CD4-positive, alpha-beta T cell (primary cell): ENCODE measurements at regions of chr3 and their contacts with region 1.

Region 1: GRCh38 chr3:38496131-38496910 is at the start of gene EXOG:
- DNase-seq: peak; percentile 92 to 97 (median 95)
- ATAC-seq: peak; percentile 92
- H3K4me3 ChIP-seq: peak within 1 kb of the TSS; percentile 93
- H3K4me3 Mint-ChIP-seq: peak within 1 kb of the TSS; percentile 90
- H3K27ac ChIP-seq: peak within 1 kb of the TSS in 1 of 2 donors; percentile 27
- H3K27ac Mint-ChIP-seq: peak within 1 kb of the TSS; percentile 59
- H3K4me1 ChIP-seq: peaks cover 10% of the 10 kb centered on the region
- H3K4me1 Mint-ChIP-seq: peaks cover 31% of the 10 kb centered on the region
- H3K27me3 ChIP-seq: no peaks in the 10 kb centered on the region
- H3K27me3 Mint-ChIP-seq: no peaks in the 10 kb centered on the region
- CTCF ChIP-seq: peak; percentile 89
- total RNA-seq, gene EXOG: 13.7 to 16.0 TPM

Region 2: DNA sequence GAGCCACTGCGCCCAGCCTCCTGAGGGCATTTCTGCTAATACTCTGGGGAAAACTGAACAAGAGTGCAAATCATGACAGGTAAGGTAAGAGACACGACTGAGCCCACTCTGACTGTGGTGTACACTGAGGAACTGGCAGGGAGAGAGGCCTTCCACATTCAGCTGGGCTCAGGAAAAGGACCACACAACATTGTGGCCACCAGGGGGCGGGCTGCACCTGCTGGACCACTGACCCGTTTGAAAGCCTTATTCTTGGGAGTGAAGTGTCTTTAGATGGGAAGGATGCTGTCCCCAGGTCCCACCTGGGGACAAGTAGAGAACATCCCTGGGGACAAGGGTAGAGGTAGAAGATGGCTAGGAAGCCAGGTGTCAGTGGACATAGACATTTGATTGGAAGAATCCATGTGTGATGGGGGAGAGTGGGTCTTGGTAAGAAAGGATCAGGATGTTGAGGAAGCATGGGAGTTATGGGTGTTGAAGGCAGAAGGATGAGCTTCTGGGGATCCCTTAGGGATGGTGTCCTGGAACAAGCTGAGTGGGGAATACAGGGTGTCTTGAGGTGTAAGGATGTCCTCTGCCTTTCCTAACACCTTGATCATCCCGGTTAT is 640.9 kb before region 1 on chr3:
- CTCF ChIA-PET with region 1: no interaction called
- POLR2A ChIA-PET with region 1: no interaction called
- intact Hi-C with region 1: loop called in 1 of 2 experiments (anchors 5 kb)
- DNase-seq: peak; percentile 50 to 85 (median 70)
- ATAC-seq: peak; percentile 47
- H3K4me3 ChIP-seq: no peak overlapping the region
- H3K4me3 Mint-ChIP-seq: peak overlapping the region; percentile 7
- H3K27ac ChIP-seq: no peak overlapping the region
- H3K27ac Mint-ChIP-seq: no peak overlapping the region
- H3K4me1 ChIP-seq: peaks cover 8% of the 10 kb centered on the region
- H3K4me1 Mint-ChIP-seq: peaks cover 8% of the 10 kb centered on the region
- H3K27me3 ChIP-seq: no peaks in the 10 kb centered on the region
- H3K27me3 Mint-ChIP-seq: no peaks in the 10 kb centered on the region
- CTCF ChIP-seq: peak; percentile 89

Region 3: DNA sequence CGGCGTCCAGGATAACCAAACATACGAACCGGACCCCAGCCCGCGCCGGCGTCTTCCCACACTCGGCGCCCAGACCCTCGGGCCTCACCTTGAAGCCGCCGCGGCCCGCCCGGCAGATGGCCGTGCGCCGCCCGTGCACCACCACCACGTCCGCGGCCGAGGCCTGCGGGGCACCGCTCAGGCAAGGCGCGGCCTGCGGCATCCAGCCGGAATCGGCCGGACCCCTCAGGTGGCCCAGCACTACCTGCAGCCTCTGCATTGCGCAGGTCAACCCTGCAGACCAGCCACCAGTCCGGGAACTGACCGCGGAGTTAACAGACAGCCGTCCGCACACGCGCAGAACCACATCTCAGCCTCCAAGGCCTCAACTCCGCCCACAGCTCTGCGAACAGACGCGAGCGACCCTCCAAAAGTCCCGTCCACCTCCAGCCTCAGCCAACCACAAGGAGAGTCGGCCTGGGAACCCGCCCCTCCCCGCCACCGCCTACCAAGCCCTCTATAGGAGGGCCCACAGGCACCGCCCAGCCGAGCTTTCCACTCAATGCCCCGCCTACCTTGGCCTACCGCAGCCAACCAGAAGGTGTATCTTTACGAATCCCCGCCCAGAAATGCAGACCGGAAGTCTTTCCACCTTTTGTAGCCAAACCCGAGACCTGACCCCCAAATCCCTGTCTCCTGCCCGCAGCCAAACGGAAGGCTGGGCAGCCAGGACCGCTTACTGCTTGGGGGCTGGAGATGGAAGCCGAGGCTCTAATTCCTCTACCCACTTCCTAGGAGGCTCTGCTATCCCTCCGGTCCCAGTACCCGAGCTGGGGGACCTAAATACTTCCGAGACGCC is 359.3 kb before region 1 on chr3 and contains the start of gene ACAA1:
- CTCF ChIA-PET with region 1: no interaction called
- POLR2A ChIA-PET with region 1: no interaction called
- intact Hi-C with region 1: loop called in 1 of 2 experiments (anchors 5 kb)
- DNase-seq: peak; percentile 91 to 99 (median 96)
- ATAC-seq: peak; percentile 84
- H3K4me3 ChIP-seq: peak within 1 kb of the TSS; percentile 95
- H3K4me3 Mint-ChIP-seq: peak within 1 kb of the TSS; percentile 99
- H3K27ac ChIP-seq: peak within 1 kb of the TSS; percentile 80 to 83
- H3K27ac Mint-ChIP-seq: peak within 1 kb of the TSS; percentile 92
- H3K4me1 ChIP-seq: peaks cover 76% of the 10 kb centered on the region
- H3K4me1 Mint-ChIP-seq: peaks cover 77% of the 10 kb centered on the region
- H3K27me3 ChIP-seq: no peaks in the 10 kb centered on the region
- H3K27me3 Mint-ChIP-seq: no peaks in the 10 kb centered on the region
- CTCF ChIP-seq: no peak
- total RNA-seq, gene ACAA1: 56.4 to 58.9 TPM

Region 4: GRCh38 chr3:38521391-38521987 is 25.2 kb after region 1 on chr3:
- CTCF ChIA-PET with region 1: interaction called, 24 read pairs
- POLR2A ChIA-PET with region 1: interaction called, 8 read pairs
- intact Hi-C with region 1: loop called in 1 of 2 experiments (anchors 2 kb)
- DNase-seq: peak; percentile 41 to 82 (median 54)
- ATAC-seq: peak; percentile 69
- H3K4me3 ChIP-seq: no peak overlapping the region
- H3K4me3 Mint-ChIP-seq: no peak overlapping the region
- H3K27ac ChIP-seq: no peak overlapping the region
- H3K27ac Mint-ChIP-seq: peak overlapping the region; percentile 57
- H3K4me1 ChIP-seq: peaks cover 16% of the 10 kb centered on the region
- H3K4me1 Mint-ChIP-seq: peaks cover 40% of the 10 kb centered on the region
- H3K27me3 ChIP-seq: no peaks in the 10 kb centered on the region
- H3K27me3 Mint-ChIP-seq: no peaks in the 10 kb centered on the region
- CTCF ChIP-seq: peak; percentile 93

Region 5: DNA sequence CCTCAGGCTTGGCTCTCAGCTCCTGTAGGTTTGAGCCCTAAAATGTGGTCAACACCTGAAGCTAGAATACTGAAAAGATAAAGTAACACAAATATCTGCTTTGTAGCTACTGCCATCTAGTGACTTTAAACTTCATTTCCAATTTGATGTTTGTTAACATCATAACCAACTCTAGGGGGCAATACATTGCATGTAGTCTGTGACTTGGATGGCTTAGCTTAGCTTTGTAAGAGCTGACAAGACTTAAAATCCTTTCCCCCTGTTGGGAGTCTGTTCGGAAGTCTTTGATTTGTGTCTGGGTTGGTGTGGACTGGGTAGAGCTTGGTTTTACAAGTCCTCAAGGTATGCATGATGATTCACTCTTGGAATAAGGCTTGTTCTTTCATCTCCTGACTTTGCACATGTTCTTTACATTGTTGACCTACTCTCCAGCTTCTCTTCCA is 503.7 kb after region 1 on chr3:
- CTCF ChIA-PET with region 1: interaction called, 5 read pairs
- POLR2A ChIA-PET with region 1: interaction called, 4 read pairs
- intact Hi-C with region 1: loop called (anchors 1 to 5 kb)
- DNase-seq: peak in 3 of 14 experiments; percentile 47 to 56 (median 51)
- ATAC-seq: peak; percentile 54
- H3K4me3 ChIP-seq: no peak overlapping the region
- H3K4me3 Mint-ChIP-seq: no peak overlapping the region
- H3K27ac ChIP-seq: no peak overlapping the region
- H3K27ac Mint-ChIP-seq: no peak overlapping the region
- H3K4me1 ChIP-seq: no peaks in the 10 kb centered on the region
- H3K4me1 Mint-ChIP-seq: no peaks in the 10 kb centered on the region
- H3K27me3 ChIP-seq: peaks cover 0 to 8% of the 10 kb centered on the region in 2 experiments
- H3K27me3 Mint-ChIP-seq: peaks cover 18% of the 10 kb centered on the region
- CTCF ChIP-seq: peak; percentile 77

Region 6: GRCh38 chr3:39038165-39038564 is 541.8 kb after region 1 on chr3:
- CTCF ChIA-PET with region 1: no interaction called
- POLR2A ChIA-PET with region 1: no interaction called
- intact Hi-C with region 1: loop called in 1 of 2 experiments (anchors 10 kb)
- DNase-seq: no peak
- ATAC-seq: no peak
- H3K4me3 ChIP-seq: no peak overlapping the region
- H3K4me3 Mint-ChIP-seq: no peak overlapping the region
- H3K27ac ChIP-seq: no peak overlapping the region
- H3K27ac Mint-ChIP-seq: no peak overlapping the region
- H3K4me1 ChIP-seq: no peaks in the 10 kb centered on the region
- H3K4me1 Mint-ChIP-seq: no peaks in the 10 kb centered on the region
- H3K27me3 ChIP-seq: no peaks in the 10 kb centered on the region
- H3K27me3 Mint-ChIP-seq: peaks cover 16% of the 10 kb centered on the region
- CTCF ChIP-seq: no peak

Region 7: GRCh38 chr3:39180546-39181346 is 684.4 kb after region 1 on chr3:
- CTCF ChIA-PET with region 1: no interaction called
- POLR2A ChIA-PET with region 1: no interaction called
- intact Hi-C with region 1: loop called in 1 of 2 experiments (anchors 10 kb)
- DNase-seq: peak; percentile 82 to 96 (median 88)
- ATAC-seq: peak; percentile 88
- H3K4me3 ChIP-seq: peak overlapping the region; percentile 53
- H3K4me3 Mint-ChIP-seq: peak overlapping the region; percentile 82
- H3K27ac ChIP-seq: peak overlapping the region; percentile 47 to 48
- H3K27ac Mint-ChIP-seq: peak overlapping the region; percentile 71
- H3K4me1 ChIP-seq: peaks cover 40% of the 10 kb centered on the region
- H3K4me1 Mint-ChIP-seq: peaks cover 28% of the 10 kb centered on the region
- H3K27me3 ChIP-seq: no peaks in the 10 kb centered on the region
- H3K27me3 Mint-ChIP-seq: no peaks in the 10 kb centered on the region
- CTCF ChIP-seq: no peak